ENCODE measurements at regions of chr12 and their contacts with region 1.

Region 1: GRCh38 chr12:118061011-118061875 is at the start of gene WSB2:
- DNase-seq: peak; percentile 76
- H3K4me3 ChIP-seq: peak within 1 kb of the TSS; percentile 72
- H3K27ac ChIP-seq: peak within 1 kb of the TSS; percentile 92
- H3K4me1 ChIP-seq: peaks cover 23% of the 10 kb centered on the region
- H3K27me3 ChIP-seq: no peaks in the 10 kb centered on the region
- CTCF ChIP-seq: no peak
- total RNA-seq, gene WSB2: 97.9 and 122 TPM in 2 replicates

Region 2: GRCh38 chr12:117742721-117743120 is 318.5 kb before region 1 on chr12:
- CTCF ChIA-PET with region 1: no interaction called
- POLR2A ChIA-PET with region 1: interaction called, 16 read pairs
- intact Hi-C with region 1: no loop called
- DNase-seq: no peak
- H3K4me3 ChIP-seq: no peak overlapping the region
- H3K27ac ChIP-seq: no peak overlapping the region
- H3K4me1 ChIP-seq: no peaks in the 10 kb centered on the region
- H3K27me3 ChIP-seq: no peaks in the 10 kb centered on the region
- CTCF ChIP-seq: no peak

Region 3: DNA sequence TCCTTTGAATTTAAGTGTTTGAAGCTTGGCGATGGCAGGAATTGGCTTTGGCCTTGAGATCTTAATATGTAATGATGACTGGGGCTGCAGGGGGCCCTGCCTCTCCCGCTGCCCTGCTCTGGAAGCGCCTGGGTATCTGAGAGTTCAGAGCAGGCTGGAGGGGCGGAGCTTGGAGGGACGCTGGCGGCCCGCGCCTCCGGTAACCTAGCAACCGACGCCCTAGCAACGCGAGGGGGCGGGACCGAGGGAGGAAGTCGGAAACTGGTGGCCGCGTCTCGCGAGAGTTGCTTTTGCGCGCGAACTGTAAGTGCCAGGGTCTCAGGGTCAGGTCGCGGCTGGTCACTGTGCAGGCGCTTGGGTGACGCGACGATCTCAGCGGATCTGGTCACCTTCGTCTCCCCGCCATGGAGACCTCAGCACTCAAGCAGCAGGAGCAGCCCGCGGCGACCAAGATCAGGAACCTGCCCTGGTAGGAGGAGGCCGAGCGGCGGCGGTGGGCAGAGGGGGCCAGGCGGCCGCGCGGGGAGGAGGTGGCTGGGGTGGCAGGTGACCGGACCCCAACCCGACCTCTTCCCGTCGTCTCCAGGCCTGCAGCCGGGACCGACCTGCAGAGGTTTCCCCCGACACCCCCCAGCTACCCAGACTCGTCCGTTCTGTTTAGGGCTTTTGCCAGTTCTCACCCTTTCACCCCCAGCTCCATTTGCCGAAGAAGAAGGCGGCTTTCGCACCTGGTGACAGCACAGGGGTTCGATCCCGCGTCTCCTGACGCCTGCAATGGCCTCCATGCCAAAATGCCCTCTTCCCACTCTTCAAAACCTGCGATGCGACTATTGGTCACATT is 44.6 kb before region 1 on chr12 and contains the start of gene RFC5:
- CTCF ChIA-PET with region 1: no interaction called
- POLR2A ChIA-PET with region 1: no interaction called
- intact Hi-C with region 1: no loop called
- DNase-seq: peak; percentile 99
- H3K4me3 ChIP-seq: peak within 1 kb of the TSS; percentile 93
- H3K27ac ChIP-seq: peak within 1 kb of the TSS; percentile 93
- H3K4me1 ChIP-seq: peaks cover 11% of the 10 kb centered on the region
- H3K27me3 ChIP-seq: no peaks in the 10 kb centered on the region
- CTCF ChIP-seq: no peak
- total RNA-seq, gene RFC5: 62.1 and 66.3 TPM in 2 replicates

Region 4: DNA sequence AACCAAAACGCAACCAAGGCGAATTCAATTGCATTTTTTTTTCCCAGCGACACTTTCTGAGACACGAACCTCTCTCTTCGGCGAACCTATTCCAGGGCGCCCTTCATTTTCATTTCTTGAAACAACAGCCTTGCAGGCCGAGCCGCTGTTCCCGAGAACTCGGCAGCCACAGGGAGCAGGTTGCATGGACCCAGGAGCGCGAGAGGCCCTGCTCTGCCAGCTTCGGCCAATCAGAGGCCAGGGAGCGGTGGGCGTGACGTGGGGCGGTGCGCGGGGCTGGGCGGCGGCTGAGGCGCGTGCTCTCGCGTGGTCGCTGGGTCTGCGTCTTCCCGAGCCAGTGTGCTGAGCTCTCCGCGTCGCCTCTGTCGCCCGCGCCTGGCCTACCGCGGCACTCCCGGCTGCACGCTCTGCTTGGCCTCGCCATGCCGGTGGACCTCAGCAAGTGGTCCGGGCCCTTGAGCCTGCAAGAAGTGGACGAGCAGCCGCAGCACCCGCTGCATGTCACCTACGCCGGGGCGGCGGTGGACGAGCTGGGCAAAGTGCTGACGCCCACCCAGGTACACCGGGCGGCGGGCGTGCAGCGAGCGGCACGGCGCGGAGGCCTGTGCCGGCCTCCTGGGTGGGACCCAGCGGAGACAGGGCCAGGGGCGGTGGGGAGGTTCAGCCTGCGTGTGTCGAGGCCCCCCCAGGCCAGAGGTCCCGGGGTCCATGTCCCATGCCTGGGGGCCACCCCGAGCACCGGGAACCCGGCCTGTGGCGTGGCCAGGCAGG is 74.7 kb after region 1 on chr12 and contains the start of gene PEBP1:
- CTCF ChIA-PET with region 1: no interaction called
- POLR2A ChIA-PET with region 1: no interaction called
- intact Hi-C with region 1: loop called (anchors 5 kb)
- DNase-seq: peak; percentile 97
- H3K4me3 ChIP-seq: peak within 1 kb of the TSS; percentile 97
- H3K27ac ChIP-seq: peak within 1 kb of the TSS; percentile 94
- H3K4me1 ChIP-seq: peaks cover 6% of the 10 kb centered on the region
- H3K27me3 ChIP-seq: no peaks in the 10 kb centered on the region
- CTCF ChIP-seq: no peak
- total RNA-seq, gene PEBP1: 312 TPM in 2 replicates